ENCODE measurements at regions of chr15 and their contacts with region 1.

Region 1: DNA sequence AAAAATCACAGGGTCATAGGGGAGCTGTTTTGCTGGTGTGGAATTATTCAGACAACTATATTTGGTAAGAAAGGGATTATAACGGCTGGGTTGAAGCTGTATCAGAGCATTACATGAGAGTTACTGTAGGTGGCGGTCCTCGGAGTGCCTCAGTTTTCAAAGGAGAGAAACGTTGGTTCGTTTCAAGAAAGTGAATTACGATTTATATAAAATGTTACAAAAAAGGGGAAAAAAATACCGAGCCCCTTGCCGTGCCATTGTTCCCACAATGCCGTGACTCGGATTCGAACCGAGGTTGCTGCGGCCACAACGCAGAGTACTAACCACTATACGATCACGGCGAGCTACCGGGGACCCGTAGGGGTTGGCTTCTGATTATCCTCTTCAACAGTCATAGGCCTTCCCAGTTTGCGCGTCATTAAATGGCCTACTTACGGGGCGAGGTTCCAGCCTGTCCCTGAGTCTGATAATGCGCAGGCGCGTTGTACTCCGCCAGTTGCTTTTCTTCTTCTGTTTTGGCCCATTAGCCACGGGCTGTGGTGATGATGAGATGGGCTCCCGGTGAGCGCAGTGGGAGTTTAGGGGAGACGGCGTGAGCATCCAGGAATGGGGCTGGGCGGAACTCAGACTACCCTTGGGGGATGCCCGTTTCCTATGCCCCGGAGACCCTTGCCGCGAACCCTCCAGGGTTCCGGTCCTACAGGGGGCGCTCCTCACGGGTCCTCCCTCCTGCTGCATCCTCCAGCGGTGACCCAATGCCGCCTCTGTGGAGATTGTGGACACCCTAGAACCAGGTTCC is 10.8 kb upstream of the SHF start:
- DNase-seq: peak; percentile 88
- ATAC-seq: peak; percentile 66
- H3K4me3 Mint-ChIP-seq: no peak overlapping the region
- H3K27ac Mint-ChIP-seq: no peak overlapping the region
- H3K4me1 Mint-ChIP-seq: peaks cover 10% of the 10 kb centered on the region
- H3K27me3 Mint-ChIP-seq: no peaks in the 10 kb centered on the region
- CTCF ChIP-seq: no peak

Region 2: DNA sequence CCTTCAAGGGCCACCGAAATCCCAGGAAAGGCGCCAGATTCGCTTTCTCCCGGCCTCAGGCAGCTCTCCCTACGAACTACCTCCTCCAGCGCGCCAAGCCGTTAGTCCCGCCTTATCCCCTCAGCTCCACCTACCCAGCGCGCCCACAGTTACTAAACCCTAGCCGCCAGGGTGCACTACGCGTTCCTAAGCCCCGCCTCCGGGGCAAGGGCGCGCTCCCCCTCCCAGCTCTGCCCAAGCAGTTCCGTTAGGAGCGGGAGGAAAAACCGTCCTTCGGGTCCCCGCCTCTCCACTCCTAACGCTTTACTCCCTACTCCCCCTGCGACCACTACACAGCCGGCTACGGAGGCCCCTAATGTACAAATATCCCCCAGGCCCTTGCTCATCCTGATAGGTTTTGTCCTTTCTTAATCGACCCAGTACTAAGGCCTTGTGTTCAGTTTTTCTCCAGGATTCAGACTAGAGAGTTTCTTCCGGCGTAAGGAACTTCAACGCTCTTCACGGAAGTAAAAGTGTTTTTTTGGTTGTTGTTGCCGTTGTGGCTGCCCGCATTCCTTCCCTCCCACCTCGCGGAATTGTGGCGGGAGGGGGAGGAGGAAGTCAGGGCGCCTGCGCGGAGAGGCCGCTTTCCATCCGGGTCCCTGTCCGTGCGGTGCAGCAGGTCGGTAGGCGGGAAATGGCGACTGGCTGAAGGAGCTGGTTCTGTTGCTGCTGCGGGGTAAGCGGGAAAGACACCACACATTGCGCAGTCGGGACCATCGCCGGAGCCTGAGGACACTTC is 771.4 kb before region 1 on chr15 and contains the start of gene CTDSPL2:
- CTCF ChIA-PET with region 1: no interaction called
- POLR2A ChIA-PET with region 1: no interaction called
- intact Hi-C with region 1: loop called (anchors 1 kb)
- DNase-seq: peak; percentile 87
- ATAC-seq: peak; percentile 97
- H3K4me3 Mint-ChIP-seq: peak within 1 kb of the TSS; percentile 100
- H3K27ac Mint-ChIP-seq: peak within 1 kb of the TSS; percentile 99
- H3K4me1 Mint-ChIP-seq: peaks cover 41% of the 10 kb centered on the region
- H3K27me3 Mint-ChIP-seq: no peaks in the 10 kb centered on the region
- CTCF ChIP-seq: no peak
- total RNA-seq, gene CTDSPL2: 44.6 and 46.8 TPM in 2 replicates

Region 3: GRCh38 chr15:45048794-45049631 is 149.5 kb before region 1 on chr15:
- CTCF ChIA-PET with region 1: no interaction called
- POLR2A ChIA-PET with region 1: interaction called, 3 read pairs
- intact Hi-C with region 1: loop called (anchors 5 kb)
- DNase-seq: no peak
- ATAC-seq: peak; percentile 87
- H3K4me3 Mint-ChIP-seq: peak overlapping the region; percentile 78
- H3K27ac Mint-ChIP-seq: peak overlapping the region; percentile 98
- H3K4me1 Mint-ChIP-seq: peaks cover 39% of the 10 kb centered on the region
- H3K27me3 Mint-ChIP-seq: no peaks in the 10 kb centered on the region
- CTCF ChIP-seq: no peak

Region 4: DNA sequence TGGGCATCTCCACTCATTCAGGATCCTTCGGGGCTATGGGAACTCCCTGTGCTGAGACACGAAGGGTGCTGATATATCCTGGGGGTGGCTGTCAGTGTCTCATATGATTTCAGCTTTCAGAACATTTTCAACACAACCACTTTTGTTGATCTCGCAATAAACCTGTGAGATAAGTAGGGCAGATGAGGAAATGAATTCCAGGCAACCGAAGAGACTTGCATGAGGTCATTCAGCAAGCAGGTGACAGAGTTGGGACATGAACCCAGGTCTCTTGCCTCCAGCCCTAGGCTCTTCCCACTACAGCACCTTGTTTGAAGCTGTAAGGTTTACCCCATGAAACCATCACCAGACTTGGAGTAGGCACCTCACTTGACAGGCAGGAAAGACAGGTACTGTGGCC is 52.1 kb before region 1 on chr15:
- CTCF ChIA-PET with region 1: no interaction called
- POLR2A ChIA-PET with region 1: no interaction called
- intact Hi-C with region 1: no loop called
- DNase-seq: no peak
- ATAC-seq: no peak
- H3K4me3 Mint-ChIP-seq: no peak overlapping the region
- H3K27ac Mint-ChIP-seq: no peak overlapping the region
- H3K4me1 Mint-ChIP-seq: no peaks in the 10 kb centered on the region
- H3K27me3 Mint-ChIP-seq: no peaks in the 10 kb centered on the region
- CTCF ChIP-seq: no peak

Region 5: GRCh38 chr15:45187894-45188830 is 10.4 kb before region 1 on chr15 and contains the start of gene SHF:
- CTCF ChIA-PET with region 1: interaction called, 6 read pairs
- POLR2A ChIA-PET with region 1: interaction called, 48 read pairs
- intact Hi-C with region 1: loop called (anchors 1 kb)
- DNase-seq: peak; percentile 55
- ATAC-seq: peak; percentile 78
- H3K4me3 Mint-ChIP-seq: peak within 1 kb of the TSS; percentile 89
- H3K27ac Mint-ChIP-seq: peak within 1 kb of the TSS; percentile 82
- H3K4me1 Mint-ChIP-seq: peaks cover 15% of the 10 kb centered on the region
- H3K27me3 Mint-ChIP-seq: peaks cover 2% of the 10 kb centered on the region
- CTCF ChIP-seq: no peak
- total RNA-seq, gene SHF: 5.8 and 8.5 TPM in 2 replicates

Region 6: GRCh38 chr15:45391746-45392583 is 193.4 kb after region 1 on chr15:
- CTCF ChIA-PET with region 1: no interaction called
- POLR2A ChIA-PET with region 1: interaction called, 24 read pairs
- intact Hi-C with region 1: loop called (anchors 1 kb)
- DNase-seq: no peak
- ATAC-seq: peak; percentile 93
- H3K4me3 Mint-ChIP-seq: peak overlapping the region; percentile 30
- H3K27ac Mint-ChIP-seq: peak overlapping the region; percentile 80
- H3K4me1 Mint-ChIP-seq: peaks cover 22% of the 10 kb centered on the region
- H3K27me3 Mint-ChIP-seq: no peaks in the 10 kb centered on the region
- CTCF ChIP-seq: no peak

Region 7: DNA sequence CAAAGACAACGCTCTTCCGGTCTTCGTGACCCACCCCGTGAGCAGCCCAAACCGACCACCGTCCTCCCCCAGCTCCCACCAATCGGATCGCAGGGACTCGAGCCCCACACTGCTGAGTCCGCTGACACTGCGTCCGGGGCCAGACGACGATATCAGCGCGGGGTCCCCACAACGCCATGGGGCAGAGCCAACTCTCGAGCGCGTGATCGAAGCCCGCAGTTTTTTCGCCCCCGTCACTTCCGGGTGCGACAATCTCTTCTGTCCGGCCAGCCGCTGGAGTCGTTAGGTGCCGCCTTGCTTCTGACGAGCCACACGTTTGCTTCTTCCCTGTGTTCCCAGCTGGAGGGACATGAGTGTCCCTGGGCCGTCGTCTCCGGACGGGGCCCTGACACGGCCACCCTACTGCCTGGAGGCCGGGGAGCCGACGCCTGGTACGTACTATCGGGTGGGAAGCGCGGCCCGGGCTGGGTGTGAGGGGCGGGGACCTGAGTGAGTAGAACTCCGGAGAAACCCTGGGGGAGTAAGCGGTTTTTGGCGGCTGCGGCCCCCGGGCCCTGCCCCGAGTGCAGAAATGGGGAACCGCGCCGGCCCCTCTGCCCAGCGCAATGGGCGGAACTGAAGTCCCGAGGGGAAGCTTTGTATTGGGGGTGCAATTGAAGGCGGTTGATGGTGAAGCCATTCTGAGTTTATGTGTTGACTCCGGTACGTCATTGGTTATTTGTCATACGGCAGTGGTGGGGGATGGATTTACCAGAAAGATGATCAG is 388.7 kb after region 1 on chr15 and contains the start of gene BLOC1S6:
- CTCF ChIA-PET with region 1: no interaction called
- POLR2A ChIA-PET with region 1: interaction called, 10 read pairs
- intact Hi-C with region 1: loop called (anchors 1 kb)
- DNase-seq: peak; percentile 93
- ATAC-seq: peak; percentile 87
- H3K4me3 Mint-ChIP-seq: peak within 1 kb of the TSS; percentile 99
- H3K27ac Mint-ChIP-seq: peak within 1 kb of the TSS; percentile 100
- H3K4me1 Mint-ChIP-seq: peaks cover 44% of the 10 kb centered on the region
- H3K27me3 Mint-ChIP-seq: no peaks in the 10 kb centered on the region
- CTCF ChIP-seq: no peak
- total RNA-seq, gene BLOC1S6: 39.4 and 41.2 TPM in 2 replicates